ENCODE measurements at regions of chr6 and their contacts with region 1.

Region 1: GRCh38 chr6:10800829-10801535 is 37.4 kb downstream of the MAK start:
- DNase-seq: peak; percentile 82
- ATAC-seq: peak; percentile 99
- H3K4me3 ChIP-seq: no peak overlapping the region
- H3K27ac ChIP-seq: no peak overlapping the region
- H3K4me1 ChIP-seq: peaks cover 9% of the 10 kb centered on the region
- H3K27me3 ChIP-seq: no peaks in the 10 kb centered on the region
- CTCF ChIP-seq: peak; percentile 99

Region 2: DNA sequence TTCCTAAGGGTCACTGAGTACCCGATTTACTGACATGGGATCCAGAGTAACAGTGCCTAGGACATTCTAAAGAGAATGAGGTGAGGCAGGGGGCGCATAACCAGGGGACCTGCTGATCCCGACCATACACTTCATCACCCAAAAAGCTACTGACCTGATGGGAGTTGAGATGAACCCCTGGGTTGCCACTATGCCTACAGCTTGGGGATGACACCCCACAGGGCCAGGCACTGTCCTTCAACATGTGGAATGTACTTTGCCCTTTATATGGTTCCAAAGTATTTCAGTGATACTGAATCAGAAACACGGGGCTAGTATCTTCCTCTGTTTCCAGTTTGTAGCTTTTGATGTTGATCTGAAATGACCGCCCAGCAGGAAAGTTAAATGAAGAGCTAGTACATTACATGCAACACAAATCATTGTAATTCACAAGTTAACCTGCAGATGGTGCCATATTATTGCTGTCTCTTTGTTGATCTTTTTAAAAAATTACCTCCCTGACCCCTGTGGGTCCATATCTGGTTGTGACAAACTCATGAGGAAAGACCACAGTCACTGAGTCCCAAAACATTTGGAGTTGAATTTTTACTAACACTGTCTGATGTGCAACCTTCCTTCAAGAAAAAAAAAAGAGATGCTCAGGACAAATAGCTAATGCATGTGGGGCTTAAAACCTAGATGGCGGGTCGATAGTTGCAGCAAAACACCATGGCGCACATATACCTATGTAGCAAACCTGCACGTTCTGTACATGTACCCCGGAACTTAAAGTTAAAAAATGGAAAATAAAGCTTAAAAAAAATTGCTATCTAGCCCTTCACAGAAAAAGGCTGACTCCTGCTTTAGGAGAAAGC is 322.6 kb before region 1 on chr6:
- CTCF ChIA-PET with region 1: interaction called, 9 read pairs
- POLR2A ChIA-PET with region 1: no interaction called
- intact Hi-C with region 1: loop called (anchors 1 kb)
- DNase-seq: peak; percentile 77
- ATAC-seq: peak; percentile 57
- H3K4me3 ChIP-seq: no peak overlapping the region
- H3K27ac ChIP-seq: no peak overlapping the region
- H3K4me1 ChIP-seq: peaks cover 9% of the 10 kb centered on the region
- H3K27me3 ChIP-seq: no peaks in the 10 kb centered on the region
- CTCF ChIP-seq: peak; percentile 85

Region 3: GRCh38 chr6:10510592-10511367 is 290.2 kb before region 1 on chr6:
- CTCF ChIA-PET with region 1: interaction called, 3 read pairs
- POLR2A ChIA-PET with region 1: no interaction called
- intact Hi-C with region 1: loop called (anchors 1 kb)
- DNase-seq: peak; percentile 77
- ATAC-seq: peak; percentile 98
- H3K4me3 ChIP-seq: peak overlapping the region; percentile 55
- H3K27ac ChIP-seq: no peak overlapping the region
- H3K4me1 ChIP-seq: peaks cover 11% of the 10 kb centered on the region
- H3K27me3 ChIP-seq: no peaks in the 10 kb centered on the region
- CTCF ChIP-seq: peak; percentile 92

Region 4: DNA sequence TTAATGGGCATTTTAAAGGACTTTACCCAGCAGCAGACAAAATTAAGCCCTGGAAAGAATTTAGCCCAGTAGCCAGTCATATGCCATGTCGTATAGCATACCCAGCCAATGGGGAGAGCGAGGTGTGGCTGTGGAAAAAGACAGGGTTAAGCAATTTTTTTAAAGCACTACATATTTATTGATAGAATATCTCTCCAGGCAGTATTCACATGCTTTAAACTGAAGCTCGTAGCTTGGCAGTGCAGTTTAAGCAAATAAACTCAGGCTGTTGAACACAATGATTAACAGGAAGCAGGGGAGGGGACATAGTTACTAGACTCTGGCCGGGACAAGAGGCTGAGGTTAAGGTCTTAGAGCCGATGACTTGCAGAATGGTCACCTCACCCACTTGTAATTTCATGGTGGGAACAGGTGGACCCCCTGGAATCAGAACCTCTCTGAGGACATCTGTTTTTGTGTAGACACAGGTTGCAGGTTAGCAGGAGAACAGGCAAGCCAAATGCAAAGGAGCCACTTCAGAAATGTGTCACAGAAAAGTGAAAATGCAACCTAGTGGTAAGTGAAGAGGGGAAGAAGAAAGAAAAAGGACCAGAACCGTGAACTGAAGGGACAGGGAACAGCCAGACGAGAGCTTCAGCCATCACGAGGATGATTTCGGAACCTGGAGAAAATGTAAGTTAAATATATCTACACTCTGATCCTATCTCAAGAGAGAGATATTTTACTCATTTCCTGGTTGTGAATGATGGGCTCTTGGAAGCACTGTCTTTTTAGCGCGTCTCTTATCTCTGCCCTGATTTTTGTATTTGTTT is 272.6 kb before region 1 on chr6:
- CTCF ChIA-PET with region 1: interaction called, 3 read pairs
- POLR2A ChIA-PET with region 1: interaction called, 3 read pairs
- intact Hi-C with region 1: loop called (anchors 1 kb)
- DNase-seq: peak; percentile 88
- ATAC-seq: peak; percentile 78
- H3K4me3 ChIP-seq: peak overlapping the region; percentile 81
- H3K27ac ChIP-seq: peak overlapping the region; percentile 82
- H3K4me1 ChIP-seq: peaks cover 25% of the 10 kb centered on the region
- H3K27me3 ChIP-seq: no peaks in the 10 kb centered on the region
- CTCF ChIP-seq: 0 out of 2 replicates have a peak, but pooled peaks have one; percentile 9

Region 5: DNA sequence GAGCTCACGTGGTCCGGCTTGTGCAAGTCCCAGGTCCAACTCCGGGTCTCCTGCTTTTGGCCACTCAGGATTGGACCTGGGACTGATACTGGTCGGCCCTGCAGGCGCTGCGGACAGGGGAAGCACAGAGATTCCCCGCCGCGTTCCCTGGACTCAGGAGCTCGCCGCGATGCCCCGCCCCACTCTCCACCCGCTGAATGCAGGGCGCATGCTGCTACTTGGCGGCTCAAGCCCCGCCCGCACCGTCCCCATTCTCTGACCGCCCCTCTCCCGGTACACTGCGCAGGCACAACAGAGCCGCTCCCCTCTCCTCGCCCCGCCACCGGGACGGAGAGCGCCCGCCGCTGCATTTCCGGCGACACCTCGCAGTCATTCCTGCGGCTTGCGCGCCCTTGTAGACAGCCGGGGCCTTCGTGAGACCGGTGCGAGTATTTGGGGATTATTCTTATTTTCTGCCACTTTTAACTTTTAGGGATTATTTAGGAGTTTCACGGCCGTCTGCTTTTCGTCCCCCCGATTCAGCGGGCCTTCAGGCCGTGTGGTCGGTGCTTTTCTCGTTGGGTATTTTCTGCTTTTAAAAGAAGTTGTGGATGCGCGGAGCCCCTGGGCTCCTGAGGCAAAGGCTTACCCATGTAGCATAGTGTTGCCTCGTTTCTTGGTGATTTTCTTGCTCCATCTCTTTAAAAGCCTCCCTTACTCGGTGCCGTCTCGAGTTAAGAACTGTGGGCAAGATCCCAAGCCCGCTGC is 78.0 kb before region 1 on chr6 and contains the start of gene TMEM14C:
- CTCF ChIA-PET with region 1: interaction called, 4 read pairs
- POLR2A ChIA-PET with region 1: interaction called, 13 read pairs
- intact Hi-C with region 1: loop called (anchors 2 kb)
- DNase-seq: peak; percentile 96
- ATAC-seq: peak; percentile 96
- H3K4me3 ChIP-seq: peak within 1 kb of the TSS; percentile 88
- H3K27ac ChIP-seq: peak within 1 kb of the TSS; percentile 67
- H3K4me1 ChIP-seq: peaks cover 24% of the 10 kb centered on the region
- H3K27me3 ChIP-seq: no peaks in the 10 kb centered on the region
- CTCF ChIP-seq: no peak
- total RNA-seq, gene TMEM14C: 85.8 and 87.8 TPM in 2 replicates

Region 6: DNA sequence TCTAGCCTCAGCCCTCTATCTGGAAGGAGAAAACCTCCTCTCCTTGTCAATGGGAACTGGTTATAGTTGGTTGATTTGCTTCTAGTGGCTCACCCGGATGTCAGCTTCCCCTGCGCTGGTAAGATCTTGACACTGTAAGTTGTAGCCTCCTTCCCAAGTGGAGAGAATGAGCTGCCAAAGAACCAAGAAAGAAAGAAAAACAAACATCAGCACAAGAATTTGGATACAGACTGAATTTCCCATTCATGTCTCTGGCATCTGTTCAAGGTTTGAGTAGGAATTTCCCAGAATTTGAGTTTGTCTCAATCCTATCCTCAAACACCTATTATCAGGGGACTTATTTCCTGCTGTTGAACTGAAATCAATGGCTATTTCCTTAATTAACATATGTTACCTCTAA is 199.0 kb after region 1 on chr6:
- CTCF ChIA-PET with region 1: no interaction called
- POLR2A ChIA-PET with region 1: no interaction called
- intact Hi-C with region 1: no loop called
- DNase-seq: no peak
- ATAC-seq: no peak
- H3K4me3 ChIP-seq: no peak overlapping the region
- H3K27ac ChIP-seq: no peak overlapping the region
- H3K4me1 ChIP-seq: no peaks in the 10 kb centered on the region
- H3K27me3 ChIP-seq: no peaks in the 10 kb centered on the region
- CTCF ChIP-seq: no peak

Region 7: GRCh38 chr6:11064836-11065235 is 263.9 kb after region 1 on chr6:
- CTCF ChIA-PET with region 1: no interaction called
- POLR2A ChIA-PET with region 1: no interaction called
- intact Hi-C with region 1: no loop called
- DNase-seq: no peak
- ATAC-seq: no peak
- H3K4me3 ChIP-seq: no peak overlapping the region
- H3K27ac ChIP-seq: no peak overlapping the region
- H3K4me1 ChIP-seq: no peaks in the 10 kb centered on the region
- H3K27me3 ChIP-seq: no peaks in the 10 kb centered on the region
- CTCF ChIP-seq: no peak

Measured in PC-3 (cell line).